A673 (cell line): ENCODE measurements at regions of chr1 and their contacts with region 1.

Region 1: DNA sequence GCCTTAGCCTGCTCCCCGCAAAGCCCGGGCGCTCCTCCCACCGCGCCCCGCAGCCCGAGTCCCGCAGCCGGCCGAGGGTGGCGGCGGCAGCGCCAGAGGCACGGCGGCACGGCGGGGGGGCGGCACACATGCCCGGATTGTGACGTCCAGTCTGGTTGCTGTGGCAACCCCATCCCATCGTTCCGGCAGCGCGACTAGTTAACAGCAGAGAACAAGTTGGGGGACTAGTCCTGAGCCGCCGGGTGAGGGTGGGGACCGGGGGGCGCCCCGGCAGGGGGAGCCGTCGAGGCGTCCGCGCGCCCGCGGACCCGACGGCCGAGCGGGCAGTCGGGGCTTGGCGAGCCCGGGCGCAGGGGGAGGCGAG is at the start of gene CHD5:
- DNase-seq: peak; percentile 50
- H3K4me3 ChIP-seq: peak within 1 kb of the TSS; percentile 37
- H3K27ac ChIP-seq: no peak within 1 kb of the TSS
- H3K4me1 ChIP-seq: peaks cover 7% of the 10 kb centered on the region
- H3K27me3 ChIP-seq: peaks cover 45% of the 10 kb centered on the region
- CTCF ChIP-seq: 0 out of 2 replicates have a peak, but pooled peaks have one; percentile 22
- total RNA-seq, gene CHD5: 0.22 and 0.58 TPM in 2 replicates

Region 2: DNA sequence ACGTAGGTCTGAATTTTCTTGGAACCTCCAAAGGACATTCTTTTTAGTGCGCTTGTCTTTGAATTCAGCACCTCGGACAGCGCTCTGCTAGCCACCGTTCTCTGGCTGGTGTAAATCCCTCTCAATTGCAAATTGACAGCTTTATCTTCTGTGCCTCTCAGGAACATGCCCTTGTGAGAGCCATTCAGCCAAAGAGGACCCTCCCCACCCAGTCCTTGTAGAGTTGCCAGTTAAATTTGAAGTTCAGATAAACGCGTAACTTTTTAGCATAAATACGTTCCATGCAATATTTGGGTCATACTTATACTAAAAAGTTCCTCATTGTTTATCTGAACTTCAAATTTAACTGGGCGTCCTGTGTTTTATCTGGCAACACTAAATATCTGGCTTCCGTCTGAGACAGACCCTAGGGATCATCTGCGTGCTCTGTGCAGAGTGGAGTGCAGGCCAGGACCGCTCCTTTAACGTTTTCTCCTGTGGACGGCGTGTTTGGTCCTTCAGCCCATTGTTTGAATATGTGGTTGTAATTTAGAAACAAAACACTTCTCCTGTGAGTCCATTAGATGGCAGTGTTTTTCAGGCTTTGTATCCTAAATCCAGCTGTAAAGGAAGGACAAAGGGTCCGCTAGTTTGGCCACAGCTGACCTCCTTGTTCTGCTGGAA is 127.5 kb before region 1 on chr1:
- CTCF ChIA-PET with region 1: interaction called, 6 read pairs
- POLR2A ChIA-PET with region 1: no interaction called
- intact Hi-C with region 1: loop called (anchors 5 kb)
- DNase-seq: peak; percentile 77
- H3K4me3 ChIP-seq: no peak overlapping the region
- H3K27ac ChIP-seq: no peak overlapping the region
- H3K4me1 ChIP-seq: no peaks in the 10 kb centered on the region
- H3K27me3 ChIP-seq: no peaks in the 10 kb centered on the region
- CTCF ChIP-seq: peak; percentile 69

Region 3: GRCh38 chr1:6108937-6109614 is 71.1 kb before region 1 on chr1:
- CTCF ChIA-PET with region 1: interaction called, 4 read pairs
- POLR2A ChIA-PET with region 1: no interaction called
- intact Hi-C with region 1: loop called (anchors 5 kb)
- DNase-seq: peak; percentile 77
- H3K4me3 ChIP-seq: no peak overlapping the region
- H3K27ac ChIP-seq: no peak overlapping the region
- H3K4me1 ChIP-seq: no peaks in the 10 kb centered on the region
- H3K27me3 ChIP-seq: no peaks in the 10 kb centered on the region
- CTCF ChIP-seq: peak; percentile 66